GM12878 (cell line): ENCODE measurements at regions of chr4 and their contacts with region 1.

Region 1: GRCh38 chr4:103091601-103092223 is 7.9 kb downstream of the BDH2 start:
- DNase-seq: peak; percentile 59
- ATAC-seq: peak; percentile 89
- H3K4me3 ChIP-seq: peak overlapping the region; percentile 16; the same call in 1 of the 2 replicates
- H3K27ac ChIP-seq: peak overlapping the region; percentile 27
- H3K4me1 ChIP-seq: peaks cover 6% of the 10 kb centered on the region; the same call in 1 of the 2 replicates
- H3K27me3 ChIP-seq: no peaks in the 10 kb centered on the region
- CTCF ChIP-seq: peak; percentile 44 to 73 (median 69); a peak in 5 of 6 replicates
- EP300 ChIP-seq: no peak
- POLR2A ChIP-seq: no peak
- RAD21 ChIP-seq: peak; percentile 98

Region 2: GRCh38 chr4:102430461-102430910 is 661.2 kb before region 1 on chr4:
- CTCF ChIA-PET with region 1: interaction called, 14 read pairs
- POLR2A ChIA-PET with region 1: no interaction called
- RAD21 ChIA-PET with region 1: interaction called, 6 read pairs
- SMC1A ChIA-PET with region 1: interaction called, 6 read pairs
- in situ Hi-C with region 1: no loop called
- intact Hi-C with region 1: loop called (anchors 5 kb)
- DNase-seq: no peak
- ATAC-seq: peak; percentile 38
- H3K4me3 ChIP-seq: peak overlapping the region; percentile 83
- H3K27ac ChIP-seq: peak overlapping the region; percentile 61
- H3K4me1 ChIP-seq: no peaks in the 10 kb centered on the region
- H3K27me3 ChIP-seq: no peaks in the 10 kb centered on the region
- CTCF ChIP-seq: no peak
- EP300 ChIP-seq: no peak
- POLR2A ChIP-seq: no peak
- RAD21 ChIP-seq: no peak

Region 3: DNA sequence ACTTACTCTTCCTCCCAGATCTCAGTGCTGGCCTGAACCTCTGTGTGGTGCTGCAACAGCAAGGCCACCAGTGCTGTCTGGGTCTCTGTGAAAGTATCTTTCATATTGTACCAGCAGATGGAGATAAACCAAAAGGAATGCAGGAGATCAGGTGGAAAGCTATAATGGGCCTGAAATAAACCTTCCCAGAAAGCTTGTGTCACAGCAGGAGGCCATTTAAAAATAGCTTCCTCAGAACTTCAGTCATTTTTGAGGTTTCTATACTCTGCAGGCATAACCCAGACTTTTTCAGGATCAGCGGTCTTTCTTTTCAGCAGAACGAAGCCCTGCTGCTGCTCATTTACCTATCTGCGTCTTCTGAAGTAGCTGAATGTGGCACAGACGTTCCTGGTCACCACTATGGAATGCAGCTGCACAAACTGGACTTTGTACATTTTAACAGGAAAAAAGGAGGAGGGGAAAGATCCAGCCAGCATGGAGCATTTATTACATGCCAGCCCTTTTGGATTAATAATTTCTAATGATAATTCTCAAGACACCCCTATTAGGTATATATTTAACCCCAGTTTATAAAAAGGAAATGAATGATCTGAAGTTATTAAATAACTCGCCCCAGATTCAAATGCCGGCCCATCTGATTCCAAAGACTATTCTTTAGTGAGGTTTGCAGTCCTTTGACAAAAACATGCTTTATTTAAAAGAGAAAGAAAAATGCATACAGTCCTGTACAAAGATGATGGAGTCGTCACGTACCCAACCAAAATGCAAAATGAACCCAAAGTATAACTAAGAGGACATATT is 470.8 kb before region 1 on chr4:
- CTCF ChIA-PET with region 1: interaction called, 57 read pairs
- POLR2A ChIA-PET with region 1: interaction called, 4 read pairs
- RAD21 ChIA-PET with region 1: interaction called, 15 read pairs
- SMC1A ChIA-PET with region 1: interaction called, 14 read pairs
- in situ Hi-C with region 1: loop called (anchors 10 kb)
- intact Hi-C with region 1: loop called (anchors 2 kb)
- DNase-seq: no peak
- ATAC-seq: peak; percentile 70
- H3K4me3 ChIP-seq: no peak overlapping the region
- H3K27ac ChIP-seq: no peak overlapping the region
- H3K4me1 ChIP-seq: peaks cover 3% of the 10 kb centered on the region; the same call in 1 of the 2 replicates
- H3K27me3 ChIP-seq: no peaks in the 10 kb centered on the region
- CTCF ChIP-seq: peak; percentile 30 to 51 (median 45); a peak in 5 of 6 replicates
- EP300 ChIP-seq: no peak
- POLR2A ChIP-seq: no peak
- RAD21 ChIP-seq: peak; percentile 78

Region 4: GRCh38 chr4:103008875-103009729 is 82.6 kb before region 1 on chr4:
- CTCF ChIA-PET with region 1: interaction called, 62 read pairs
- POLR2A ChIA-PET with region 1: no interaction called
- RAD21 ChIA-PET with region 1: interaction called, 13 read pairs
- SMC1A ChIA-PET with region 1: interaction called, 12 read pairs
- in situ Hi-C with region 1: no loop called
- intact Hi-C with region 1: loop called (anchors 2 kb)
- DNase-seq: peak; percentile 46
- ATAC-seq: peak; percentile 96
- H3K4me3 ChIP-seq: no peak overlapping the region
- H3K27ac ChIP-seq: no peak overlapping the region
- H3K4me1 ChIP-seq: no peaks in the 10 kb centered on the region
- H3K27me3 ChIP-seq: no peaks in the 10 kb centered on the region
- CTCF ChIP-seq: peak; percentile 59 to 82 (median 64)
- EP300 ChIP-seq: no peak
- POLR2A ChIP-seq: no peak
- RAD21 ChIP-seq: peak; percentile 97

Region 5: GRCh38 chr4:103024996-103025395 is 66.7 kb before region 1 on chr4:
- CTCF ChIA-PET with region 1: interaction called, 19 read pairs
- POLR2A ChIA-PET with region 1: interaction called, 3 read pairs
- RAD21 ChIA-PET with region 1: interaction called, 5 read pairs
- SMC1A ChIA-PET with region 1: interaction called, 9 read pairs
- in situ Hi-C with region 1: no loop called
- intact Hi-C with region 1: no loop called
- DNase-seq: no peak
- ATAC-seq: no peak
- H3K4me3 ChIP-seq: no peak overlapping the region
- H3K27ac ChIP-seq: no peak overlapping the region
- H3K4me1 ChIP-seq: no peaks in the 10 kb centered on the region
- H3K27me3 ChIP-seq: no peaks in the 10 kb centered on the region
- CTCF ChIP-seq: no peak
- EP300 ChIP-seq: no peak
- POLR2A ChIP-seq: no peak
- RAD21 ChIP-seq: no peak

Region 6: GRCh38 chr4:103046416-103047290 is 45.1 kb before region 1 on chr4:
- CTCF ChIA-PET with region 1: interaction called, 179 read pairs
- POLR2A ChIA-PET with region 1: interaction called, 4 read pairs
- RAD21 ChIA-PET with region 1: interaction called, 33 read pairs
- SMC1A ChIA-PET with region 1: interaction called, 98 read pairs
- in situ Hi-C with region 1: loop called (anchors 5 kb)
- intact Hi-C with region 1: loop called (anchors 1 kb)
- DNase-seq: no peak
- ATAC-seq: peak; percentile 98
- H3K4me3 ChIP-seq: no peak overlapping the region
- H3K27ac ChIP-seq: no peak overlapping the region
- H3K4me1 ChIP-seq: peaks cover 6% of the 10 kb centered on the region
- H3K27me3 ChIP-seq: no peaks in the 10 kb centered on the region
- CTCF ChIP-seq: peak; percentile 68 to 78 (median 72)
- EP300 ChIP-seq: no peak
- POLR2A ChIP-seq: no peak
- RAD21 ChIP-seq: peak; percentile 74

Region 7: GRCh38 chr4:103075901-103076739 is 15.6 kb before region 1 on chr4:
- CTCF ChIA-PET with region 1: interaction called, 66 read pairs
- POLR2A ChIA-PET with region 1: interaction called, 6 read pairs
- RAD21 ChIA-PET with region 1: interaction called, 69 read pairs
- SMC1A ChIA-PET with region 1: interaction called, 59 read pairs
- in situ Hi-C with region 1: no loop called
- intact Hi-C with region 1: no loop called
- DNase-seq: no peak
- ATAC-seq: peak; percentile 75
- H3K4me3 ChIP-seq: peak overlapping the region; percentile 77
- H3K27ac ChIP-seq: peak overlapping the region; percentile 93
- H3K4me1 ChIP-seq: peaks cover 8% of the 10 kb centered on the region
- H3K27me3 ChIP-seq: no peaks in the 10 kb centered on the region
- CTCF ChIP-seq: 0 out of 6 replicates have a peak, but pooled peaks of 1 of the 3 experiments have one; percentile 11
- EP300 ChIP-seq: no peak
- POLR2A ChIP-seq: peak; percentile 89
- RAD21 ChIP-seq: no peak